Left cardiac atrium (tissue), 4 donors: ENCODE measurements at regions of chr7 and their contacts with region 1.

Region 1: DNA sequence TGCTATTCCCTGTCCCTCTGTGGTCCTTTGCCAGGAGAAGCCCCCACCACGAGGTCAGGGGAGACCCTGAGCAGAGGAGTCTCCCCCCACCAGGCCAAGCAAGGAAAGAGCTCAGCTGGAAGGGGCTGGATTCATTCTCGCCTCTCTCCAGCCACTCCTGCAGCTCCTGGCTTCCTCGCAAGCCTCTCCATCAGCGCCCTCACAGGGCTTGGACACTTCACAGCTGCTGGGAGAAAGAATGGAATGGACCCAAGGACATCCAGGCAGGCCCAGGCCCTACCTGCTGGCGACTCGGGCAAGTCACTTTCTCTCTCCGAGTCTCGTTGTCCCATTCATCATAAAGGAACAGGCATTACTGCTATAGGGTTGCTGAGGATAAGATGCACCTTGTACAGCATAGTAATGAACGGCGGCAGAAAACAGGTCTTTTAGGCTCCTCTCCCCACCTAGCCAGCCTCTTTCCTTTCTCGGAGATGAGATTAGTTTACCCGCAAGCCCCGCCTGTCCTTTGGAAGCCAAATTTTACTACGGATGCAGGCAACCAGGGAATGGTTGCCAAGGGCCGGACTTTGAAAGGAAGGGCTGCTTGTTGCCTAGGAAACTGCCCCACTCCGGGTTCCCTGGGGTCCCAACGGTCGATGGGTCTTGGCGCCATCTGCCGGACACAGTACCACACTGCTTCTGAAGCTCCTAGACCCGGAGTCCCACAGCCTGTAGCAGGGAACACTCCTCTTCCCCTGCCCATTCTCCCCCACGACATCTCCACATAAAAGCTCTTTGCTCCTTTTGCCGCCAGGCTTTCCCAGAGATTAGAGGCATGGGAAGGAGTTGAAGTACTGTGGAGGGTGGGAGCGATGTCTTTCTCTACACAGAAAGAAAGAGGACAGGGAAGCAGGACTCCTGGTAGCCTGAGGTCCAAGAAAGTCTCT is 22.3 kb downstream of the IMPDH1 start:
- DNase-seq: peak; percentile 88
- ATAC-seq: peak; percentile 84 to 93

Region 2: GRCh38 chr7:128201051-128201689 is 186.3 kb before region 1 on chr7:
- intact Hi-C with region 1: no loop called
- DNase-seq: no peak
- ATAC-seq: peak in 1 of 2 donors; percentile 26

Region 3: GRCh38 chr7:128347647-128348097 is 39.8 kb before region 1 on chr7:
- intact Hi-C with region 1: loop called (anchors 1 to 5 kb)
- DNase-seq: peak; percentile 59
- ATAC-seq: peak in 1 of 2 donors; percentile 18